Naive thymus-derived CD4-positive, alpha-beta T cell (primary cell): ENCODE measurements at regions of chr3 and their contacts with region 1.

Region 1: DNA sequence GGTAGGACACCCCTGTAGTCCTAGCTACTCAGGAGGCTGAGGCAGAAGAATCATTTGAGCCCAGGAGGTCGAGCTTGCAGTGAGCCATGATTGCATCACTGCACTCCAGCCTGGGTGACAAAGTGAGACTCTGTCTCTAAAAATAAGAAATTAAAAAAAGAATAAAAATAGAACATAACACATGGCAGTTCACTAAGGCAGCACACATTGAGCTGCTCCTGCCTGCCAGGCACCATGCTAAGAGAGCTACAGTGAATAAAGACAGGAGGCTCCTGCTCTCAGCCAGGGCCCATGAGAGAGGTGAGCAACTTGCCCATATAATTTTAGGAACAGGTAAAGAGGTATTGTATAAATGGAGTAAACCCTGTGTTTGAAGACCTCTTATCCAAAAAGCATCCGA is 54.3 kb downstream of the EBLN2 start:
- DNase-seq: no peak
- ATAC-seq: no peak
- H3K4me3 ChIP-seq: no peak overlapping the region
- H3K4me3 Mint-ChIP-seq: no peak overlapping the region
- H3K27ac ChIP-seq: no peak overlapping the region
- H3K27ac Mint-ChIP-seq: no peak overlapping the region
- H3K4me1 ChIP-seq: no peaks in the 10 kb centered on the region
- H3K4me1 Mint-ChIP-seq: no peaks in the 10 kb centered on the region
- H3K27me3 ChIP-seq: no peaks in the 10 kb centered on the region
- H3K27me3 Mint-ChIP-seq: peaks cover 0 to 19% (median 7%) of the 10 kb centered on the region in 5 donors

Region 2: DNA sequence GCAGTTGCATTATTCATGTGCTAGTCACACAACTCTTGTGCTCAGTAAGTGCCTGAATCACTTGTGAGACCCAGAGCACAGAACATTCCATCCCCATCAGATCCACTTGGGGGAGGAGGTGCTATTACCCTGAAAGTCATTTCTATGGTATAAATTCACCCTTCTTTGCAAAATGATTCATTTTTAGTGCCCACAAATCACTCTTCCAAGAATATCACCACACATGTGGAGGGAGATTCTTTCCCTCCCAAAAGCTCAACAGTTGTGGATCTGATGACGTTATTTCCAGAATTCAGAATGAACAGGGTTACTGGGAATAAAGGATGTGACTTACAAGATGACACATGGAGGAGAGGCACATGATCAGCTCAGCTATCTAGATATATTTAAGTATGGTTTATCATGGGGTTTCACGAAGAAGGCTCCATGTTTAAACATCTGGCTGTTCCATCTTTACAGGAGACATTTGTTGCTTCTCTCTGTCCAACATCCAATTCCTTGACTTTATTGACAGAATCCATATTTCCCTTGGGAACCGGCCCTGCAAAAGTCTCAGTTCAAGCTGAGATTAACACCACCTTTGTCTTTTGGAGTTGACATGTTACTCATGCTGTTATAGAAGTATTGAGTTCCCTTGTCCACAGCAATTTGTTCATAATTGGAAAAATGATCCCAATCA is 1116.7 kb before region 1 on chr3:
- CTCF ChIA-PET with region 1: no interaction called
- POLR2A ChIA-PET with region 1: no interaction called
- intact Hi-C with region 1: no loop called
- DNase-seq: no peak
- ATAC-seq: no peak
- H3K4me3 ChIP-seq: no peak overlapping the region
- H3K4me3 Mint-ChIP-seq: no peak overlapping the region
- H3K27ac ChIP-seq: no peak overlapping the region
- H3K27ac Mint-ChIP-seq: peak overlapping the region in 1 of 9 donors; percentile 64
- H3K4me1 ChIP-seq: no peaks in the 10 kb centered on the region
- H3K4me1 Mint-ChIP-seq: peaks cover 0 to 40% (median 0%) of the 10 kb centered on the region in 7 donors
- H3K27me3 ChIP-seq: no peaks in the 10 kb centered on the region
- H3K27me3 Mint-ChIP-seq: peaks cover 0 to 5% (median 3%) of the 10 kb centered on the region in 5 donors

Region 3: GRCh38 chr3:72163809-72164634 is 951.8 kb before region 1 on chr3:
- CTCF ChIA-PET with region 1: no interaction called
- POLR2A ChIA-PET with region 1: no interaction called
- intact Hi-C with region 1: no loop called
- DNase-seq: no peak
- ATAC-seq: peak; percentile 75
- H3K4me3 ChIP-seq: no peak overlapping the region
- H3K4me3 Mint-ChIP-seq: no peak overlapping the region
- H3K27ac ChIP-seq: no peak overlapping the region
- H3K27ac Mint-ChIP-seq: no peak overlapping the region
- H3K4me1 ChIP-seq: no peaks in the 10 kb centered on the region
- H3K4me1 Mint-ChIP-seq: no peaks in the 10 kb centered on the region
- H3K27me3 ChIP-seq: no peaks in the 10 kb centered on the region
- H3K27me3 Mint-ChIP-seq: peaks cover 0 to 4% (median 0%) of the 10 kb centered on the region in 5 donors

Region 4: GRCh38 chr3:73164622-73165021 is 48.8 kb after region 1 on chr3:
- CTCF ChIA-PET with region 1: no interaction called
- POLR2A ChIA-PET with region 1: interaction called, 10 read pairs
- intact Hi-C with region 1: no loop called
- DNase-seq: no peak
- ATAC-seq: no peak
- H3K4me3 ChIP-seq: no peak overlapping the region
- H3K4me3 Mint-ChIP-seq: no peak overlapping the region
- H3K27ac ChIP-seq: no peak overlapping the region
- H3K27ac Mint-ChIP-seq: no peak overlapping the region
- H3K4me1 ChIP-seq: no peaks in the 10 kb centered on the region
- H3K4me1 Mint-ChIP-seq: no peaks in the 10 kb centered on the region
- H3K27me3 ChIP-seq: no peaks in the 10 kb centered on the region
- H3K27me3 Mint-ChIP-seq: peaks cover 0 to 11% (median 3%) of the 10 kb centered on the region in 5 donors

Region 5: DNA sequence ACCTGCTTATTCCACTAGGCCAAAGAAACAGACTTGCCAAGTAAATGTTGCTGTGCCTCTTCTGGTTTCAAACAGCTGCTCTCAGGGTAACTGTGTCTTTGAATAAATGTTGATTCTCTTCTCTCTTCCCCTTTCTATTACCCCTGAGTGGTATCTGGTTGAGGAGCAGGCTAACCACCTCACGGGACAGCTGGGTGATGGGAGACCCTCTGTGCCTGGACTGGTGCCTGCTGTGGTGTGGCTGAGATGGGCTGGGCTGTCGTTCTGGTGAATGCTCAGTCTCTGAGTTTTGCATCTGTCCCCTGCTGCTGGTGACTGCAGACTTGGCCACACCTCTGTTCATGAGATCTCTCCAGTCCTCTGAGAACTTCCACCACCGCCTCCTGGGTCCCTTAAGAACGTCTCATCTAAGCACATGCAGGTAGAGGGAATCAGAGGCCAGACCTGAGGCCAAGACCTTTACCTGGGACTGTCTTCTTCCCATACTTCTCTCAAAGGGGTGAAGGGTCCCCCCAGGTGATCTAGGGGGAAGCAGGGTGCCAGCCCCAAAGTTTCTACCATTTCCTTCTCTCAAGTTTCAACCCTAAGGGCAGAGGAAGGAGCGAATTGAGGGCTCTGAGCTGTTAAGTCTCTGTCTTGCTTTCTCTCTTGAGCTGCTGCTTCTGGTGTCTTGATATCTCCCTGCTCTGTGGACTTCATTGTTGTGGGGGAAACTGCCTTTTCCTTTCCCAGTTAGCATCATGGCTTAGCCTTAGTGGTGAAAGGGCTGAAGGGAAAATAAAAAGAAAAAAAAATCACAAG is 198.5 kb after region 1 on chr3:
- CTCF ChIA-PET with region 1: no interaction called
- POLR2A ChIA-PET with region 1: no interaction called
- intact Hi-C with region 1: no loop called
- DNase-seq: no peak
- ATAC-seq: no peak
- H3K4me3 ChIP-seq: no peak overlapping the region
- H3K4me3 Mint-ChIP-seq: no peak overlapping the region
- H3K27ac ChIP-seq: no peak overlapping the region
- H3K27ac Mint-ChIP-seq: no peak overlapping the region
- H3K4me1 ChIP-seq: no peaks in the 10 kb centered on the region
- H3K4me1 Mint-ChIP-seq: no peaks in the 10 kb centered on the region
- H3K27me3 ChIP-seq: no peaks in the 10 kb centered on the region
- H3K27me3 Mint-ChIP-seq: peaks cover 0 to 13% (median 5%) of the 10 kb centered on the region in 5 donors